ENCODE measurements at regions of chr20 and their contacts with region 1.

Region 1: DNA sequence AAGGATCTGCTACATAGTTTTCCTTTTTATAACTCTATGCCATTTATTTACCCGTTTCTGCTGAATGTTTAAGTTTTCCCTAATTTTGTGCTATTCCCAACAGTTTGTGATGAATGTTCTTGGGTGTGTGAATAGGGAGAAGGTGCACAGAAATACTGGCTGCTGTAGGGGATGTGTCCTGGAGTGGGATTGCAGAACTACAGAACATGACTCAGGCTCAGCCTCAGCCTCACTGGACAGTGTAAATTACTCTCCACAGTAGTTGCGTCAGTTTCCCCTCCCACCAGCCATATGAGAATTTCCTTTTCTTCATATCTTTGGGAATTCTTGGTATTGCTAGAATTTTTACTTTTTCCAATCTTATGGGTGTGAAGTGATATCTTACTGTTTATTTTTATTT is 57.0 kb downstream of the SLX4IP start:
- DNase-seq: no peak
- ATAC-seq: no peak
- H3K4me3 ChIP-seq: no peak overlapping the region
- H3K27ac ChIP-seq: no peak overlapping the region
- H3K4me1 ChIP-seq: peaks cover 11% of the 10 kb centered on the region; the same call in 1 of the 2 replicates
- H3K27me3 ChIP-seq: no peaks in the 10 kb centered on the region
- CTCF ChIP-seq: no peak
- EP300 ChIP-seq: no peak
- POLR2A ChIP-seq: no peak
- RAD21 ChIP-seq: no peak

Region 2: GRCh38 chr20:10453241-10453640 is 38.8 kb before region 1 on chr20:
- CTCF ChIA-PET with region 1: no interaction called
- POLR2A ChIA-PET with region 1: no interaction called
- in situ Hi-C with region 1: no loop called
- intact Hi-C with region 1: loop called (anchors 5 kb)
- DNase-seq: no peak
- ATAC-seq: no peak
- H3K4me3 ChIP-seq: no peak overlapping the region
- H3K27ac ChIP-seq: no peak overlapping the region
- H3K4me1 ChIP-seq: peaks cover 3% of the 10 kb centered on the region
- H3K27me3 ChIP-seq: no peaks in the 10 kb centered on the region
- CTCF ChIP-seq: no peak
- EP300 ChIP-seq: no peak
- POLR2A ChIP-seq: no peak
- RAD21 ChIP-seq: no peak

Region 3: DNA sequence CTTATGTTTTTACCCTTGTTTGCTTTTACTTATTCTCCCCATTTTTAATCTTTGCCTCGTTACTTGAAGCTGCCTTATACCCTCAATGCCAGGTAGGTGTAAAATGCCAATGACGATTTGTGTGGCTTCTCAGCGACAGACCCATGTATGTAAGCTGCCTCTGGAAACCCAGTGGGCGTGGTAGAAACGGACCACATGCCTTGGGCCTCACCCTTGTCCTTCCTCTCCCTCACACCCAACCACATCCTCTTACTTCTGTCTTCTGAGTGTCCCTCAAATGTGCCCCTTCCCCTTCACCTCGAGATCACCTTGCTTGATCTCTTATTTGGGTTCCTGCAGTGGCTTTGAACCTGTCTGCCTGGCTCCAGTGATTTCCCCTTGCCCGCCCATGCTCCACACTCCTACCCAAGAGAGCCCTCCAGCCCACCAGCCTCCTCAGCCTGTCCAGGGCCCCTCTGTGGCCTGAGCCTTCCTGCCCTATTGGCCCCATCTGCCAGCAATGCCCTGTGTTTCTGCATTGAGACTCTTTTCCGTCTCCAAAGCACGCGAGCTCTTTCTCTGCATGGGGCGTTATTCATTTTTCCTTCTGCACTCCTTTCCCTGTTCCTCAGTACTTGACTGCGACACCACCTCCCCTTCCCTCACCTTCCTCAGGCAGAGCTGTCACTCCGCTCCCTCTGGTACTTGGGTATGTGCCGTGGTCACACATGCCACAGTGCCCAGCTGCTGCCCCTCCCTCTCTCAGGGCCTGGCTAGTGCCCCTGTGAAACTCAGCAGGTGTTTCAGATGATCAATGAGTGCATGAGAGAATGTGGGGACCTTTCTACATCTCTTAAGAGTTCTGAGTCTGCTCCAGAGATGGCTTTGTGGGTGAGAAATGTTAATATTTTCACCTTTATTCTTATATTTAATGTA is 58.4 kb after region 1 on chr20:
- CTCF ChIA-PET with region 1: no interaction called
- POLR2A ChIA-PET with region 1: no interaction called
- in situ Hi-C with region 1: no loop called
- intact Hi-C with region 1: no loop called
- DNase-seq: no peak
- ATAC-seq: no peak
- H3K4me3 ChIP-seq: no peak overlapping the region
- H3K27ac ChIP-seq: no peak overlapping the region
- H3K4me1 ChIP-seq: peaks cover 73% of the 10 kb centered on the region
- H3K27me3 ChIP-seq: no peaks in the 10 kb centered on the region
- CTCF ChIP-seq: no peak
- EP300 ChIP-seq: no peak
- POLR2A ChIP-seq: no peak
- RAD21 ChIP-seq: no peak